ENCODE measurements at regions of chr12 and their contacts with region 1.

Region 1: GRCh38 chr12:34121360-34121759 is 99.1 kb downstream of the ALG10 start:
- DNase-seq: no peak
- ATAC-seq: no peak
- H3K4me3 ChIP-seq: no peak overlapping the region
- H3K27ac ChIP-seq: no peak overlapping the region
- H3K4me1 ChIP-seq: peaks cover 0 to 5% of the 10 kb centered on the region in 2 donors
- H3K27me3 ChIP-seq: no peaks in the 10 kb centered on the region
- CTCF ChIP-seq: no peak

Region 2: GRCh38 chr12:33926095-33926494 is 195.3 kb before region 1 on chr12:
- intact Hi-C with region 1: no loop called
- DNase-seq: no peak
- ATAC-seq: no peak
- H3K4me3 ChIP-seq: no peak overlapping the region
- H3K27ac ChIP-seq: no peak overlapping the region
- H3K4me1 ChIP-seq: no peaks in the 10 kb centered on the region
- H3K27me3 ChIP-seq: no peaks in the 10 kb centered on the region
- CTCF ChIP-seq: no peak

Region 3: DNA sequence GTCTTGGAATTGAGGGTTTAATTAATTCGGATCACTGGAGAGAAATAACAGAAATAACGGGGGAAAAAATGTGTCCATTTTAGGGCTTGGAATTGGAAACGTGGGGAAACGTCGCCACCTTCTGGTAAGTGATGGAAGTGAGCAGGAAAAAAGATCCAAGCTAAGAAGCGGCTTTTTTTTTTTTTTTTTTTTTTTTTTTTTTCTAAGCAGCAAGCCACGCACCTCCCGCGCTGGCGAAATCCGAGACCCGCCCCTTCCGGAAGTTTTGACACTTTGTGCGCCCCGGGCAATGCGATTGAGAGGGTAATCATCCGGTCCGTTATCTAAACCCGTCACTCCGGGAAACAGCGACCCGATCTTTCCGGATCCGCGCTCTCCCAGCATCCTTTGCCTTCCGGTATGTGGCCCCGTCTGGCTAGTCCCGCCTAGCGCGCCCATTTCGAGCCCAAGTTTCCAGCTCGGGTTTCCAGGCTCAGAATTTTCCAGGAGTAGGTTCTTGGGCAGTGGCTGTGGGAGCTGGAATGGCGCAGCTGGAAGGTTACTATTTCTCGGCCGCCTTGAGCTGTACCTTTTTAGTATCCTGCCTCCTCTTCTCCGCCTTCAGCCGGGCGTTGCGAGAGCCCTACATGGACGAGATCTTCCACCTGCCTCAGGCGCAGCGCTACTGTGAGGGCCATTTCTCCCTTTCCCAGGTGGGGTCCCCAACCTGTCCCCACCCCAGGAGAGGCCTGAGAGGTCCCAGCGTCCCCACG is 99.1 kb before region 1 on chr12 and contains the start of gene ALG10:
- intact Hi-C with region 1: no loop called
- DNase-seq: peak; percentile 94 to 98 (median 96)
- ATAC-seq: peak; percentile 100
- H3K4me3 ChIP-seq: peak within 1 kb of the TSS; percentile 66
- H3K27ac ChIP-seq: peak within 1 kb of the TSS; percentile 80 to 88
- H3K4me1 ChIP-seq: peaks cover 0 to 22% of the 10 kb centered on the region in 2 donors
- H3K27me3 ChIP-seq: no peaks in the 10 kb centered on the region
- CTCF ChIP-seq: peak; percentile 63 to 70
- polyA plus RNA-seq, gene ALG10: 8.5 to 12.1 (median 9.8) TPM

Region 4: DNA sequence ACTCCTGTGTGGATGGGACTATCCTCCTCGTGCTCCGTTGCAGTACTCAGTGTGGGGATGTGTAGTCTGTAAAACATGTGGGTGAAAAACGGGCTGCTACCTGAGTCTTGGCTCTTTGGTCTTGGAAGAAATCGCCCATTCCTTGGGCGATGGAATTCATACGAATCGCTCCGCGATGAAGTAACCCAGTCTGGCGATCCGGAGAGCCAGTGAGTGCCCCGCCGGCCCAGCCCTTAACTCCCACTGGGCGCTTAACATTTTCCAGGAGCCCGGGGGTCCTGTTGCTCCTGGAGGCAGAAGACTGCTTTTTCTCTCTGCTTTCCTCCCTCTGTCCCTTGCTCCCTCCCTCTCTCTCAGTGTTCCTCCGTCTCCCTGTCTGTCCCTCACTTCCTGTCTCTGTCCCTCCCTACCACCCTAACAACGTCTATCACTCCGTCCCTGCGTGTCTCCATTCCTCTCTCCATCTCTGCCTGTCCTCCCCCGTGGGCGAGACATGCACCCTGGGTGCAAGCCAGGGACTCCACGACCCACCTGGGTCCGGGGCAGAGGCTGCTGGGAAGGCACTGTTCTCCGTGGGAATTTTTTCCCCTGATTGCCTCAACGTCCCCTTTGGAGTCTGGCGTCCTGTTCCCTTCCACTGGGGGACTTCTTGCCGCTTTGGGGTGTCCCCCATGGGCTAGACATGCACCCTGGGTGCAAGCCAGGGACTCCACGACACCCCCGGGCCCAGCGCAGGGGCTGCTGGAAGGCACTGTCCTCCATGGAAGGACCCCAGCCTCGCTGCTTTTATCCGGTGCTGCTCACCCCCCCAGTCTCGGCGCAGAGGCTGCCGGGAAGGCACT is 89.5 kb after region 1 on chr12:
- intact Hi-C with region 1: loop called in 1 of 2 experiments (anchors 5 kb)
- DNase-seq: no peak
- ATAC-seq: no peak
- H3K4me3 ChIP-seq: no peak overlapping the region
- H3K27ac ChIP-seq: no peak overlapping the region
- H3K4me1 ChIP-seq: no peaks in the 10 kb centered on the region
- H3K27me3 ChIP-seq: no peaks in the 10 kb centered on the region
- CTCF ChIP-seq: no peak

Region 5: GRCh38 chr12:34311337-34311736 is 190.0 kb after region 1 on chr12:
- intact Hi-C with region 1: no loop called
- DNase-seq: no peak
- ATAC-seq: no peak
- H3K4me3 ChIP-seq: no peak overlapping the region
- H3K27ac ChIP-seq: no peak overlapping the region
- H3K4me1 ChIP-seq: no peaks in the 10 kb centered on the region
- H3K27me3 ChIP-seq: no peaks in the 10 kb centered on the region
- CTCF ChIP-seq: no peak